ENCODE measurements at regions of chr14 and their contacts with region 1.

Region 1: DNA sequence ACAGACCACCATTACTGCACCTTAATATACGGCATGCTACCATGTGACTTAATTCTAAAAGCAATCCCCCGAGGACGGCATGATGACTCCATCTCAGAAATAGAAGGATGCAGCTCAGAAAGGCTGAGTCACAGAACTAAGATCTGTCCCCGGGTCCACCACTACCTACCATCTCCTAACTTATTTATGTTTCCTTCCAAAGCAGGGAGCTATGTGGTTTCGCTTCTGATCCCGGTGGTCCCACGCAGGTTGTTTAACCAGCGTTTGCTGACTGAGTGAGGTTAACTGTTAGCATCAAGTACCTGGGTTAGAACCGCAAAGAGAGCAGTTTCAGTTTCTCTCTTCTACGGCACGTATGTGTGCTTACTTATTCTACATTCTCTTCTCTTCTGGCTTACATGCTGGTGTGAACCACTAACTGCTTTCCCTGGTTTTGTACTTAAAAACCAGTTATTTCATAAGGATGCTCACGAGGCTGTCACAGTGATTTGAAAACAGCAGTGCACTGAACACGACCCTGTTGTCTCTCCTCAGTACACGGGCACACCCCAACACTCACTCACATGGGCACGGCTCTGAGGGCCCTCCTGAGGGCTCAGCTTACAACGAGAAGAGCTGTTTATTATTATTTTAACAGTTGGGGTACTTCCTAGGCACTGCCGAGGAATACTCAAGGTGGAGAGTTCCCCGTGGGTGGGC is 66.7 kb downstream of the CCDC88C start:
- DNase-seq: no peak
- ATAC-seq: peak; percentile 60
- H3K4me3 Mint-ChIP-seq: peak overlapping the region; percentile 81
- H3K27ac Mint-ChIP-seq: peak overlapping the region; percentile 85
- H3K4me1 Mint-ChIP-seq: peaks cover 93% of the 10 kb centered on the region
- H3K27me3 Mint-ChIP-seq: no peaks in the 10 kb centered on the region
- CTCF ChIP-seq: no peak

Region 2: DNA sequence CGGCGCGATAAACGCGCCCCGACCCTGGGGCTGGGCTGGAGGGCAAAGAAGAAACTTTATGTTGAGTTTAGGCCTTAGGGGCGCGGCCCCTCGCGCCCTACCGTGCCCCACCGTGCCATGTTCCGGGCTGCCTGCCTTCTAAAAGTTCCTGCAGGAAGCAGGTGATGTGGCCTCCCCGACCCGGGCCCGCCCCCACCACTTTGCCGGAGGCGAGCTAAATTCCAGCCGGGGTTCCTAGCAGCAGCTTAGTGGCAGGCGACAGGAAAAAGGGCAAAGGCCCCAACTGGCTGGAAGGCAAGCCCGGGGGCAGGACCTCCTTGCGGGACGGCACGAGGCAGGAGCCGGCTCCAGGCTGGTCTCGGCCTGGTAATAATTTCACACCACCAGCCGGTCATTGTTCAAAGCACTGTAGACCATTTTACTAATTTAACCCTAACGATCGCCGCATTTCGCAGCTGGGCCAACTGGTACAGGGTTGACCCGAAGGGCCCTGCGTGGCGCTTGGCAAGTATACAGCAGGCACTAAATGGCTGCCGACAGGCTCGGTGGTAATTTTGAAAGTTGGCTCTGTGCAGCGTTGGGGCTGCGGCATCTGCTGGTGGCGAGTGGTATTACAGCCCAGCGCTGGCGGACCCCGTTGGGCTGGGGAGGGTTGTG is 67.6 kb after region 1 on chr14:
- CTCF ChIA-PET with region 1: interaction called, 10 read pairs
- POLR2A ChIA-PET with region 1: interaction called, 52 read pairs
- intact Hi-C with region 1: loop called (anchors 1 kb)
- DNase-seq: peak; percentile 84
- ATAC-seq: peak; percentile 37
- H3K4me3 Mint-ChIP-seq: peak overlapping the region; percentile 81
- H3K27ac Mint-ChIP-seq: peak overlapping the region; percentile 93
- H3K4me1 Mint-ChIP-seq: peaks cover 42% of the 10 kb centered on the region
- H3K27me3 Mint-ChIP-seq: no peaks in the 10 kb centered on the region
- CTCF ChIP-seq: peak; percentile 36

Region 3: DNA sequence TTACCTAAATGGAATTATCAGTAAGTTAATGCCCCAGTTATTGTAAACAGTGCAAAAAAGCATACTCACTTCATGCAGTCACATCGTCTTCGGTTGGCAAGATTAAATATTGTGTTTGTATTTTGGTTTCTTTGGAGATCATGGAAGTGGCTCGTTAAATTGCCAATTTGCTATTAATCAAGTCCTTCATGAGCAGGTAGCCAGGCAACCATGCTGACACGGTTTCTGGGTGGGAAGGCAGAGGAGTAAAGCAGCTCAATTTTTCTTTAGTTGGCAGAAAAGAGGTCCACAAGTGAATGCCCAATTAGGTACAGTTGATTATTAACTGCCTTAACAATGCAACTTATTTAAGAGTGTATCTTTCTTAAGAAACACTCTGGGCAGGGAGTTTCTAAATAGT is 115.2 kb after region 1 on chr14:
- CTCF ChIA-PET with region 1: no interaction called
- POLR2A ChIA-PET with region 1: no interaction called
- intact Hi-C with region 1: no loop called
- DNase-seq: no peak
- ATAC-seq: no peak
- H3K4me3 Mint-ChIP-seq: no peak overlapping the region
- H3K27ac Mint-ChIP-seq: no peak overlapping the region
- H3K4me1 Mint-ChIP-seq: peaks cover 5% of the 10 kb centered on the region
- H3K27me3 Mint-ChIP-seq: no peaks in the 10 kb centered on the region
- CTCF ChIP-seq: no peak